Activated CD4-positive, alpha-beta T cell treated with anti-CD3 and anti-CD28 coated beads for 36 hours (primary cell): ENCODE measurements at regions of chrX and their contacts with region 1.

Region 1: GRCh38 chrX:13688958-13689740 is at the start of gene RAB9A:
- DNase-seq: peak; percentile 88
- ATAC-seq: peak; percentile 85
- H3K4me3 Mint-ChIP-seq: peak within 1 kb of the TSS; percentile 85
- H3K27ac Mint-ChIP-seq: peak within 1 kb of the TSS; percentile 97
- H3K4me1 Mint-ChIP-seq: peaks cover 63% of the 10 kb centered on the region
- H3K27me3 Mint-ChIP-seq: no peaks in the 10 kb centered on the region
- total RNA-seq, gene RAB9A: 24.9 to 31.4 TPM

Region 2: DNA sequence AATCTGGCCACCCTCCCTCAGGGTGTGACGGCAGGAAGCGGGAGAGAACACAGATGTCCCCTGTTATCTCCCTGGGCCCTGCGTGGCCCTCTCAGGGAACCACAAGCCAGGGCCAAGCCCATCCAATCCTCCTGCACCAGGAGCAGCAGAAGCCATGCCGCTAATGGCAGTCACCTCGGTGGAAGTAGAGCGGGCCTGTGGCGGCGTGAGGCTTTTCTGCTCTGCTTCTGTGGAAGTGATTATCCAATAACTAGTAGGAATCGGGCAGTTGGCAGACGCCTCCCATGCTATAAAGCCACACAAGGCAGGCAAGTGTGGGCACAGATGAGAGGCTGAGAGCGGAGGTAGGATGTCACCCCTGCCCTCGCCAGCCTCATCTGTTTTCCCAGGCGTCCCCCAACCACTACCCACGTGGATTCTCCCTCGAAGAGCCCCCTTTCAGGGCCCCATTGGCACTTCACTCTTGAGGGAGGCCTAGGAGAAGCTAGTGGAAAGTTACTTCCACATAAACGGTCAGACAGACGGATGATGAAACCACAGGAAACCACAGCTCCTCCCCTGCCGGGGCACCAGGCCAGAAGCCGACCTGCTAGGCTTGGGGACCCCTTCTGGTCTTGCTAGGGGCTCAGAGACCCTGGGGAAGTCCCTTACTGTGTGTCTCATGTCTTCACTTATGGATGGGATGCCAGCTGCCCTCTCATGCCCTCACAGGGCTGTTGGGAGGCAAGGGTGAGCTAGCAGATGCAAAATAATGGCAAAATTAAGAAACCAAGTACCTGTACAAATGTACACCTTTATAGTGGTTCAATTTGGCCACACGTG is 733.1 kb before region 1 on chrX:
- CTCF ChIA-PET with region 1: no interaction called
- POLR2A ChIA-PET with region 1: no interaction called
- intact Hi-C with region 1: loop called in 1 of 2 experiments (anchors 5 kb)
- DNase-seq: peak; percentile 80
- ATAC-seq: peak; percentile 31
- H3K4me3 Mint-ChIP-seq: peak overlapping the region; percentile 82
- H3K27ac Mint-ChIP-seq: peak overlapping the region; percentile 96
- H3K4me1 Mint-ChIP-seq: peaks cover 75% of the 10 kb centered on the region
- H3K27me3 Mint-ChIP-seq: no peaks in the 10 kb centered on the region

Region 3: DNA sequence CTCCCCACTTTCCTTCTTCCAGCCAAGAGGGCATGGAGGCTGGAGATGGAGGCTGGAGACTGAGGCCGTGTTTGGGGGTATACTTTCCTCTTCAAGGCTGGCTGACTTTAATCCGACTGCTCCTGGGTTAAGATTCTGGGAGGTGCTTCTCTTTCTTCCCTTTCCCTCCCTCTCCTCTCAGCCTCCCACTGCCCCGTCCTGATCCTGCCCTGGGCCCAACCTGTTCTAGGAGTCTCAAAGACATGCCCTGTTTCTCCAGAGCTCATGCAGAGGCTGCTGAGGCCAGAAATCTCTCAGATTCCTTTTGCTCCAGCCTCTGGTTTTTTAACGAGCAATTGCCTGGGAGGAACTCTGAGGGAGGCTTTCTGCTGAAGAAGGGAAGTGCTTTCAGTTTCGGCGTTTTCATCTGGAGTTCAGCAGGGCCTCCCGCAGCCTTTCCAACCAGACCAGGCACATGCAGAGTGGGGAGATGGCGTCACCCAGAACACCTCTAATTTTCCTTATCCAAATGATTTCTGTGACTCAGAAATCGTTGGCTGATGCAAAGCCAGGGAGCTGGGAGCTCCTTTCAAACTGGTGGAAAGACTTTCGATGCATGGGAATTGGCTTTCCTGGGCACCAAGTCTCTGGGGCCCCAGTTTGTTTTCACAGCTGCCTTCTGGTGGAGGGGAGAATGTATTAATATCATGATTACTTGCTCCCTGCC is 610.3 kb before region 1 on chrX:
- CTCF ChIA-PET with region 1: no interaction called
- POLR2A ChIA-PET with region 1: no interaction called
- intact Hi-C with region 1: loop called in 1 of 2 experiments (anchors 10 kb)
- DNase-seq: no peak
- ATAC-seq: no peak
- H3K4me3 Mint-ChIP-seq: peak overlapping the region; percentile 29
- H3K27ac Mint-ChIP-seq: peak overlapping the region; percentile 75
- H3K4me1 Mint-ChIP-seq: peaks cover 87% of the 10 kb centered on the region
- H3K27me3 Mint-ChIP-seq: no peaks in the 10 kb centered on the region

Region 4: DNA sequence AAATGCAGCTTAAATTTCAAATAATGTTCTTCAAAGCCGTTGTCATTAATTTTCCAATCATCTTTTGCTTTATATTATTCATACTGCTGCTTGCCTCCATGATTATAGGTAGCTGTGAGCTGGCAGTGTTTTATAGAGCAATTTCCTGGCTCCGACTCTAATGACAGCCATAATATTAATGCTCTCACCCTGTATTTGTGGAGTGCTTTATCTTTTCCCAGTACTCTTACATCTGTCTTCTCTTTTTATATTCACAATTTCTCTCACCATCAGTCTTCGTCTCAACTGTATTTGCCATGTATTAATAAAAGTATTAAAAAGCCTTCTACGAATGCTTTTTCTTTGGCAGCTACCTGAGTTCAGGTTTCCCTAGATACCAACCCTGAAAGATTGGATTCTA is 390.3 kb before region 1 on chrX:
- CTCF ChIA-PET with region 1: no interaction called
- POLR2A ChIA-PET with region 1: no interaction called
- intact Hi-C with region 1: no loop called
- DNase-seq: no peak
- ATAC-seq: no peak
- H3K4me3 Mint-ChIP-seq: no peak overlapping the region
- H3K27ac Mint-ChIP-seq: no peak overlapping the region
- H3K4me1 Mint-ChIP-seq: peaks cover 22% of the 10 kb centered on the region
- H3K27me3 Mint-ChIP-seq: no peaks in the 10 kb centered on the region

Region 5: DNA sequence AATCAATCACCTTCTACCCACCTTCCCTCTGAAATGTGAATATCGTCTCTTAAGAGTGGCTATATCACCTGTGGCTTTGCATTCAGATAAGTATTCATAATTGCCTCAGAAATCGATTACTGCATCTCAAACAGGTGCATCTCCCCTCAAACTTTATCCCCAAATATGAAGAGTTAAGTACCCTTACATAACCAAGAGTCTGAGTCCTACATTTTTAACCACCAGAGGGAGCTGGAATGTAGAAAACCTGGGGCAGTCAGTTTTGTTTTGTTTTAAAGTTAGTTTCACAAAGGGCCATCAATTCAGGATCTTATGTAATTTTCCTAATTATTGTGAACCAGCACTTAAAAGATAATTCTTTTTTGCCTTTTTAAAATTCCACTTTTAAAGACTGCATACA is 30.5 kb before region 1 on chrX:
- CTCF ChIA-PET with region 1: interaction called, 3 read pairs
- POLR2A ChIA-PET with region 1: interaction called, 3 read pairs
- intact Hi-C with region 1: loop called (anchors 1 to 2 kb)
- DNase-seq: no peak
- ATAC-seq: no peak
- H3K4me3 Mint-ChIP-seq: no peak overlapping the region
- H3K27ac Mint-ChIP-seq: no peak overlapping the region
- H3K4me1 Mint-ChIP-seq: peaks cover 36% of the 10 kb centered on the region
- H3K27me3 Mint-ChIP-seq: no peaks in the 10 kb centered on the region

Region 6: DNA sequence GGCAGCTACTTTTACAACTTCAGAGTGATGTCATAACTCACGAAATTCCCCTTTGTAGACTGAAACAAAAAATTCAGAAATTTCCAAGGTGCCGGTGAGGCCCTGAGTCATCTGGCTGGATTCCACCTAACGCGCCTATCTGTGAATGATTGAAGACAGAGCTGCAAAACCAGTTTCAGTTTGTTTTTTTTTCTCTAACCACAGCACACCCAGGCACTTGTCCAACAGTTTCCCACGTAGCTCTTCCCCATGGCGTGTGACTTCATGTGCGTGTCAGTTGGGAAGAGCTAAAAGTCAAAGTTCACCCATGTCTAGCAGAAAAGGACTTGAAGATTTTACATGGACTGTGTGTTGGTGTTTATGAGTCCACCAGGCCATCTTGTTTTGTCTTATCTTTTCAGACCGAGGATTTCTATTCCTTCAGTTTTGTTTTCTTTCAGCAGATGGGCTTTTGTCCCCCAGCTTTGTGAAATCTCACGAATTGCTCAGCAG is 19.9 kb before region 1 on chrX:
- CTCF ChIA-PET with region 1: interaction called, 8 read pairs
- POLR2A ChIA-PET with region 1: interaction called, 6 read pairs
- intact Hi-C with region 1: loop called (anchors 1 kb)
- DNase-seq: peak; percentile 76
- ATAC-seq: peak; percentile 93
- H3K4me3 Mint-ChIP-seq: peak overlapping the region; percentile 51
- H3K27ac Mint-ChIP-seq: peak overlapping the region; percentile 93
- H3K4me1 Mint-ChIP-seq: peaks cover 11% of the 10 kb centered on the region
- H3K27me3 Mint-ChIP-seq: no peaks in the 10 kb centered on the region

Region 7: DNA sequence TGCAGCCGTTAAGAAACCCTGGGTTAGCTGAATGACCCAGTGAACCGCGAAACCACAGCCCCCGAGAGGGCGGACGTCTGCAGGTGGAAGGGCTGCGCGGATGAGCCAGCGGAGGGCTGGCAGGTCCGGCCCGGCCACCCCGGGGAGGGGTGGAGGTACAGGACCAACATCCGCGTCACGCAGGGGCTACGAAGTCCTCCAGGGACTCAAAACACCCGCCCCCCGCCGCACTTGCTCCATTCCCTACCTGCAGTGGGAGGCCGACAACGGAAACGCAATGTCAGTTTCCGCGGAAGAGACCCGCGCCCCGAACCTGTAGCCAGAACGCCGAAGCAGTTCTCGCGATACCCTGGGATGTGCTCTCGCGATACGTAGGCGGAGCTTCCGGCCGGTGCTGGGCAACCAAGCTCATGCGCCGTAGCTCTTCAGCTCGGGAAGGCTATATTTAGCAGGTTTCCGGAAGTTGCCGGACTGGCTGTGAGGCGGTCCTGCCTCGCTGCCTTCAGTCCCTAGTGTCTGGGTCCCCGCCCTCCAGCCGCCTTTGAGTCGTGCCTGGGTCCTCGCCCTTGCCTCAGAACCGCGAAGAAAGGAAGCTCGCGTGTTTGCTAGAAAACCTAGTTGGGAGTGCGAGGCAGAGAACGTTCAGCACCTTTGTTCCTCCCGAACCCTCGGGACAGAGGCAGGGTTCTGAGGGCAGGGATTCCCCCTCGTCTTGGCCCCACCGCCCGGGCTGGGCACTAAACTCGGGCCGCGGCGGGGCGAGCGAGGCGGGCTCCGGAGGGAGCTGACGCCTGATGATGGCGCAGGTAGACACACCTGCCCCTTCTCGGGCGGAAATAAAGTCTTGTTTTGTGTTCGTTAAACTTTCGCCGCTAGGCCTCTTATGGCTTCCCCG is 45.4 kb after region 1 on chrX and contains the starts of genes OFD1 and TRAPPC2:
- CTCF ChIA-PET with region 1: interaction called, 10 read pairs
- POLR2A ChIA-PET with region 1: interaction called, 4 read pairs
- intact Hi-C with region 1: loop called (anchors 1 to 2 kb)
- DNase-seq: peak; percentile 93
- ATAC-seq: peak; percentile 95
- H3K4me3 Mint-ChIP-seq: peak within 1 kb of the TSS; percentile 81
- H3K27ac Mint-ChIP-seq: peak within 1 kb of the TSS; percentile 93
- H3K4me1 Mint-ChIP-seq: peaks cover 42% of the 10 kb centered on the region
- H3K27me3 Mint-ChIP-seq: no peaks in the 10 kb centered on the region
- total RNA-seq, gene OFD1: 28.0 to 32.4 TPM
- total RNA-seq, gene TRAPPC2: 10.3 to 16.4 TPM